ENCODE measurements at regions of chr5 and their contacts with region 1.

Region 1: DNA sequence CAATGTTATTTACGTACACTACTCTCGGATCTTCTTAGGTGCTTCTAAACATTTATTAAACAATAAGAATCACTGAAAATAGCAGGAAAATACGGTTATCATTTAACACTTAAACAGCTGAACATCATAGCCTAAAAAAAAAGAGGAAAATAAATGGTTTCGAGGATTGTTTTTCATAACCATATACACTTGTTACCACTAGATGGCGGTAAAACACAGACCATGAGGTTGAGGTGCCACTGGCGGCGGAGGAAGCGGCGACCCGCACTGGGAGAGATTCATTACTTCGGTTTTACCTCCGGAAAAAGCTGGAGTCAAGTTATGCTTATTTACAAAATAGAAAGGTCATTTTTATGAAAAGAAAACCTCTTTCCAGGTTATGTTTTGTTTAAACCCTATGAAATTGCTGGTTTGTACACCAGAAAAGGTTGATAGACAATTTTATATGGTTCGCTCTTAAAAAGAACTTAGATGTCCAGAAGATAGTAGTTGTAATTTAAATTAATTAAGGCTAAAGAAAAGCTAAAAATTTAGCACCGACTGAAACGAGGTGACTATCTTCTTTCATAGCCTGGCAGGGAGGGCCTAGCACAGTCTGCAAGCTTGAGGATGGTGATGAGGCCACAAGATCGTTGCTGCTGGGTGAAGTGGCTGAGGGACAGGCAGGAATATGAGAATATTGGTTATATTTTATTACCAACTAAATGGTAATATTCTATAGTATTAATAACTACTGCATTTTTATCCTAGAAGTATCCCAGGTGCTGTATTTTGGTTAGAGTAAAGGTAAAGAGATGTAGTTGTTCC is 605.7 kb downstream of the RAB3C start:
- DNase-seq: peak; percentile 79
- ATAC-seq: peak; percentile 80 to 82

Region 2: GRCh38 chr5:59367791-59368394 is 179.3 kb after region 1 on chr5:
- intact Hi-C with region 1: loop called (anchors 1 to 5 kb)
- DNase-seq: peak; percentile 52
- ATAC-seq: peak in 1 of 2 donors; percentile 56

Region 3: GRCh38 chr5:59380350-59380951 is 191.8 kb after region 1 on chr5:
- intact Hi-C with region 1: loop called in 1 of 2 experiments (anchors 5 kb)
- DNase-seq: no peak
- ATAC-seq: peak; percentile 57 to 68